Ovary (tissue), 10 donors: ENCODE measurements at regions of chr6 and their contacts with region 1.

Region 1: GRCh38 chr6:44096612-44097011 is 30.6 kb downstream of the MRPL14 start:
- DNase-seq: peak; percentile 69 to 81 (median 77)
- H3K4me3 ChIP-seq: no peak overlapping the region
- H3K27ac ChIP-seq: no peak overlapping the region
- H3K4me1 ChIP-seq: peaks cover 2% of the 10 kb centered on the region
- H3K27me3 ChIP-seq: no peaks in the 10 kb centered on the region
- CTCF ChIP-seq: peak; percentile 60 to 69 (median 65)
- EP300 ChIP-seq: no peak
- POLR2A ChIP-seq: no peak

Region 2: DNA sequence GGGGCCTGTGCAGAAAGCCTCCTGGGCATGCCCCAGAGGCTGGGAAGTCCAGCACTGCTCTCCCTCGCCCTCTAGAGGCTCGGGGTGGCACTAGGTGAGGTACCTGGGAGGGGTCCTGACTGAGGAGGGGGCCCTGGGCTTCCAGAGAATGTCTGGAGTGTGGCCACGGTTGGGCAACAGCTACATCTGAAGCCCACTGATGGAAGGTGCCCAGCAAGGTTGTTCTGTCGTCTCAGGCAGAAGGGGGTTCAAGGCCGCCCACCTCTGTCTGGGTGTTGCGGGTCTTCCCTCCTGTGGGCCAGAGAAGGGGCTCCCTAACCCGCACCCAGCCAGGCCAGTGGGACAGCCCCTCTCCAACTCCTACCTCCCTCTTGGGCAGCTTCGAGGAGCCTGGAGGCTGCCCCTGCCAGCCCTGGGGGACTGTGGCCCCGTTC is 338.0 kb before region 1 on chr6:
- intact Hi-C with region 1: no loop called
- DNase-seq: no peak
- H3K4me3 ChIP-seq: no peak overlapping the region
- H3K27ac ChIP-seq: no peak overlapping the region
- H3K4me1 ChIP-seq: peaks cover 2% of the 10 kb centered on the region
- H3K27me3 ChIP-seq: no peaks in the 10 kb centered on the region
- CTCF ChIP-seq: peak in 1 of 3 donors; percentile 14
- EP300 ChIP-seq: no peak
- POLR2A ChIP-seq: no peak

Region 3: GRCh38 chr6:44028789-44029310 is 67.8 kb before region 1 on chr6:
- intact Hi-C with region 1: no loop called
- DNase-seq: no peak
- H3K4me3 ChIP-seq: no peak overlapping the region
- H3K27ac ChIP-seq: no peak overlapping the region
- H3K4me1 ChIP-seq: peaks cover 4% of the 10 kb centered on the region
- H3K27me3 ChIP-seq: no peaks in the 10 kb centered on the region
- CTCF ChIP-seq: no peak
- EP300 ChIP-seq: no peak
- POLR2A ChIP-seq: no peak

Region 4: GRCh38 chr6:44116641-44117382 is 20.2 kb after region 1 on chr6:
- intact Hi-C with region 1: no loop called
- DNase-seq: no peak
- H3K4me3 ChIP-seq: no peak overlapping the region
- H3K27ac ChIP-seq: no peak overlapping the region
- H3K4me1 ChIP-seq: peaks cover 4% of the 10 kb centered on the region
- H3K27me3 ChIP-seq: no peaks in the 10 kb centered on the region
- CTCF ChIP-seq: no peak
- EP300 ChIP-seq: no peak
- POLR2A ChIP-seq: no peak

Region 5: GRCh38 chr6:44151348-44152108 is 54.9 kb after region 1 on chr6:
- intact Hi-C with region 1: loop called (anchors 2 to 5 kb)
- DNase-seq: peak; percentile 56 to 85 (median 74)
- H3K4me3 ChIP-seq: no peak overlapping the region
- H3K27ac ChIP-seq: no peak overlapping the region
- H3K4me1 ChIP-seq: peaks cover 3% of the 10 kb centered on the region
- H3K27me3 ChIP-seq: no peaks in the 10 kb centered on the region
- CTCF ChIP-seq: peak; percentile 92 to 100 (median 96)
- EP300 ChIP-seq: no peak
- POLR2A ChIP-seq: no peak

Region 6: GRCh38 chr6:44338228-44339122 is 241.9 kb after region 1 on chr6:
- intact Hi-C with region 1: loop called in 2 of 4 experiments (anchors 10 kb)
- DNase-seq: peak; percentile 14 to 53 (median 49)
- H3K4me3 ChIP-seq: no peak overlapping the region
- H3K27ac ChIP-seq: no peak overlapping the region
- H3K4me1 ChIP-seq: peaks cover 3% of the 10 kb centered on the region
- H3K27me3 ChIP-seq: no peaks in the 10 kb centered on the region
- CTCF ChIP-seq: peak; percentile 29 to 38 (median 37)
- EP300 ChIP-seq: no peak
- POLR2A ChIP-seq: no peak